ENCODE measurements at regions of chr20 and their contacts with region 1.

Region 1: DNA sequence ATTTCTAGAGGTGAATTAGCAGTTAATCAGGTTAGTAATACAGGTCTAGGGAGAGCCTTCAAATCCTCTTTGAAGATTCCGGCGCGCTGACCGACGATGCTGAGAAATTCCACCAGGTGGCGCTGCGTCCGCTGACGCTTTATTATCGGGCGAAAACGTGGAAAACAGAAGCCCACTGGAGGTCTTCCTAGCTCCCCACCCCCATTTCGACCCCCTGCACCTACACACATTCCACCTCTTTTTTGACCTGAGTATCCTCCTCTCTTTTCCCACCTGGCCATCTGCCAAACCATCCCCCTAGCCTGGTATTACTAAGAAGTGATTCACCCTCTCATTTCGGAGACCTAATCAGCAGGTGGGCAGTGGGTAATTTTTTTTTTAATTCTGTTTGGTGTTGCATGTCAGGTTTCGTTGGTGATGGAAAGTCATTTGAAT is 65.4 kb upstream of the RIN2 start:
- DNase-seq: peak; percentile 42 to 61
- ATAC-seq: peak in 4 of 8 donors; percentile 12 to 39 (median 28)
- H3K4me3 ChIP-seq: peak overlapping the region in 1 of 10 donors; percentile 3
- H3K27ac ChIP-seq: no peak overlapping the region
- H3K4me1 ChIP-seq: peaks cover 0 to 47% (median 18%) of the 10 kb centered on the region in 9 donors
- H3K27me3 ChIP-seq: no peaks in the 10 kb centered on the region
- CTCF ChIP-seq: peak; percentile 88 to 95 (median 93)

Region 2: DNA sequence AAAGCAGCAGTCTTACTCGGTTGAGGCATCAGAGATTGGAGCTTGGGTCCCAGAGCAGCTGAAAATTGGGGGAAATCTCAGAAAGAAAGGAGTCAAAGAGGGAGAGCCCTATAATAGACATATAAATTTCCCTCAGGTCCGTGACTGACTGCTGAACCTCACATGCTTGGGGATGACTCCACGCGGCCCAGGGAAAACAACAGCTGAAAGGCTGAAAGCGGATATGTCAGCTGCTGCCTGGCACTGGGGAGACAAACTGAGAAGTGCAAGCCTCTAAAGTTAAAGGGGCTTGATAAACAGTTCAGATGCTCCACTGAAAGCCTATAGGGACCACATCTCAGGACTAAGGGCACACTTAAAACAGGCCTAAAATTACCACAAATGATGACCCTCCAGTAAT is 190.5 kb before region 1 on chr20:
- intact Hi-C with region 1: no loop called
- DNase-seq: no peak
- ATAC-seq: no peak
- H3K4me3 ChIP-seq: no peak overlapping the region
- H3K27ac ChIP-seq: no peak overlapping the region
- H3K4me1 ChIP-seq: no peaks in the 10 kb centered on the region
- H3K27me3 ChIP-seq: peaks cover 0 to 6% (median 0%) of the 10 kb centered on the region in 7 donors
- CTCF ChIP-seq: no peak

Region 3: DNA sequence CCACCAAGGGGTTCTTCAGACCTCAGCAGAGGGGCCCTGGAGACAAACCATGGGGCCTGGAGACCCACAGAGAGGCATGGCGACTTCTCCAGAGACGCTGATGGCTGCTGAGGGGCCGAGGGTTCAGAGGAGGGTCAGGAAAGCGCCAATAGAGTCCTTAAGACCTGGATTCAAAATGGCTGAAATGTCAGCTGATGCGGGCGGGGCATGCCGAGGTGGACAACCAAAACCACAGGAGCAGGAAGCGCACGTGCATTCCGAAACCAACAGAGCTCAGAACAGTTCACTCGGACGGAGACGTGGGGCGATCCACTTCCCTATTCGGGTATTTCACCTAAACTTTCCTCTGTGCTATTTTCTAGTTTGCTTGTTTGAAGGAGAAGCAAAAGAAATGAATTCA is 34.6 kb before region 1 on chr20:
- intact Hi-C with region 1: no loop called
- DNase-seq: no peak
- ATAC-seq: no peak
- H3K4me3 ChIP-seq: no peak overlapping the region
- H3K27ac ChIP-seq: no peak overlapping the region
- H3K4me1 ChIP-seq: peaks cover 0 to 7% (median 5%) of the 10 kb centered on the region in 9 donors
- H3K27me3 ChIP-seq: peaks cover 0 to 35% (median 13%) of the 10 kb centered on the region in 7 donors
- CTCF ChIP-seq: no peak

Region 4: DNA sequence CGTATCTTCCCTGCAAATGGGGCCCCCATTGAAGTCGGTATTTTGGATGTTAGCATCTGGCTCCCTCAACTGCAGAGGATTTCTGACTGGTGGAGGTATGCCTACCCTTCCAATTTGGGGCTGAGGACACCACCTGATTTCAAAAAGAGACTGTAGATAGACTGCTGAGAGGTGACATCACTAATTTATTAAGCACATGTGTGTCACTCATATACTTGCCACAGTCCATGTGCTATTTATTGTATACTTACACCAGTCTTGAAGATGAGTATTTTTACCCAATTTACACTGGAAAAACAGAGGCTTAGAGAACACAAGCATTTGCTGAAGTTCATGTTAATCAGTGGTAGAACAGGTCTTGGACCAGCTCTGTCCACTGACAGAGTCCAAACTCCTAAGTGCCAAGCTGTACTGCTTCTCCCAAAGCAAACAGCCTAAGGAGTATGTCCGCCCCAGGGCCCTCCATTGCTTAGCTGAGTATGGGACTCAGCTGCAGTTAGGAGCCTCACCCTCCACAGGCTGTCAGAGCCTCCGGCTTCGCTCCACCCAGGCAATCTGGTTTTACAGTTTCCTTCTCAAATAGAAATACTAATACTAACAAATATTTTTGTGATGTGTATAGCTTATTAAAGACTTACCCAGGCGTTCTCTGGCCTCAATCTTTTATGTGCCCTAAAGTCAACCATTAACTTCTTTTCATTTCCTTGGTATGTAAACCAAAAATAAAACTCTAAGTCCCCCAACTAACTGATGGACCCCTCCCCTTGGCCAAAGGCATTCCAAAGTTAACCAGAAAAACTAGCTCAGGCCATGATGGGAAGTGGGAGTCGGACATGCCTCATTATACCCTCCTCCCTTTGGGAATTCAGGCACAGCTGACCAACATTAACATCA is 82.9 kb after region 1 on chr20:
- intact Hi-C with region 1: loop called in 5 of 10 experiments (anchors 5 to 10 kb)
- DNase-seq: no peak
- ATAC-seq: peak in 5 of 8 donors; percentile 27 to 62 (median 60)
- H3K4me3 ChIP-seq: no peak overlapping the region
- H3K27ac ChIP-seq: peak overlapping the region in 9 of 10 donors; percentile 8 to 71 (median 57)
- H3K4me1 ChIP-seq: peaks cover 33 to 95% (median 74%) of the 10 kb centered on the region in 9 donors
- H3K27me3 ChIP-seq: no peaks in the 10 kb centered on the region
- CTCF ChIP-seq: no peak

Region 5: GRCh38 chr20:19802492-19803158 is 109.9 kb after region 1 on chr20:
- intact Hi-C with region 1: loop called in 7 of 10 experiments (anchors 1 to 10 kb)
- DNase-seq: no peak
- ATAC-seq: peak in 7 of 8 donors; percentile 37 to 69 (median 65)
- H3K4me3 ChIP-seq: no peak overlapping the region
- H3K27ac ChIP-seq: peak overlapping the region in 3 of 10 donors; percentile 6 to 49 (median 13)
- H3K4me1 ChIP-seq: peaks cover 10 to 75% (median 34%) of the 10 kb centered on the region in 9 donors
- H3K27me3 ChIP-seq: no peaks in the 10 kb centered on the region
- CTCF ChIP-seq: peak in 7 of 9 donors; percentile 11 to 51 (median 35)

Region 6: GRCh38 chr20:19974626-19975435 is 282.1 kb after region 1 on chr20:
- intact Hi-C with region 1: loop called in 1 of 10 experiments (anchors 10 kb)
- DNase-seq: peak; percentile 85 to 93
- ATAC-seq: peak; percentile 73 to 93 (median 82)
- H3K4me3 ChIP-seq: peak overlapping the region; percentile 46 to 71 (median 59)
- H3K27ac ChIP-seq: peak overlapping the region; percentile 88 to 97 (median 93)
- H3K4me1 ChIP-seq: peaks cover 26 to 97% (median 74%) of the 10 kb centered on the region in 9 donors
- H3K27me3 ChIP-seq: no peaks in the 10 kb centered on the region
- CTCF ChIP-seq: peak in 1 of 9 donors; percentile 12

Region 7: DNA sequence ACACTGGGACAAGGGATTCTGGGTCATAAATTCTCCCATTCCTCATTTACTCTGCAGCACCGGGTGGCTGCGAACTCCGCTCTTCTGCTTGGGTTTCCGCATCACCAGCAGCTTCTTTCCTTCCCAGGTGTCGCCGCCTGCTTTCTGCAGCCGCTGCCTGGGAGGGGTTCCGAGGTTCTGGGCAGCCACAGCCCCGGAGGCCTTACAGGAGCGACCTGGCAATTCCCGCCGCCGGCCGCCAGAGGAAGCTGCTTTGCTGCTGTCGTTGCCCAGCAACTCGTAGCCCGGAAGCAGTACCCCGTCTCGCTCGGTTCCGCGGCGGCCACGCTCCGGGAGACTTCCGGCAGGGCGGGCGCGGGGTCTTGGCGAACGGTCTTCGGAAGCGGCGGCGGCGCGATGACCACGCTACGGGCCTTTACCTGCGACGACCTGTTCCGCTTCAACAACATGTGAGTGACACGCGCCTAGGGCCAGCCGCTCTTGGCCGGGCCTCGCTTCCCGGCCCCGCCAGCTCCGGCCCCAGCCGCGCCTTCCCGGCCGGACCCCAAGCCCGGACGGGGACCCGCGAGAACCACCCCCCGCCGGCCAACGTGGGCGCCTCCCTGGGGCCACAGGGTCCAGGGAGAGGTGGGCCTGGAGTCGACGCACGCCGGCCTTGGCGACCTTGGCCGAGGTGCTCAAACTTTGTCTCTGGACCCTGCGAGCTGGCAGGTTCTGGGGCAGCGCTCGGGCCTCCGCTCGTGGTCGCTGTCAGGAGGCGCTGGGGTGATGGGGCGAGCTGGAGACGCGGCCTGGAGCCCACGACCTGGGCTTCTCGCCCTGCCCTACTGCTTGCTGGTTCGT is 324.5 kb after region 1 on chr20 and contains the start of gene NAA20:
- intact Hi-C with region 1: loop called in 1 of 10 experiments (anchors 5 kb)
- DNase-seq: peak; percentile 94
- ATAC-seq: peak; percentile 98 to 99 (median 99)
- H3K4me3 ChIP-seq: peak within 1 kb of the TSS; percentile 66 to 98 (median 94)
- H3K27ac ChIP-seq: peak within 1 kb of the TSS; percentile 54 to 91 (median 82)
- H3K4me1 ChIP-seq: peaks cover 2 to 59% (median 41%) of the 10 kb centered on the region in 9 donors
- H3K27me3 ChIP-seq: no peaks in the 10 kb centered on the region
- CTCF ChIP-seq: peak; percentile 63 to 86 (median 77)
- total RNA-seq, gene NAA20: 53.7 to 68.0 (median 62.5) TPM

Measured in heart right ventricle (tissue), 16 donors.